Activated T-helper 1 cell treated with anti-CD3 and anti-CD28 coated beads, Interleukin-12 subunit alpha, Interleukin-12 subunit beta, Interleukin-2, Interleukin-4 antibody, amounts not matched to agents 30 ng/mL and 10 ng/mL and 1 ng/mL, durations not matched to agents 14 hours and 24 hours and 36 hours (primary cell): ENCODE measurements at regions of chr2 and their contacts with region 1.

Region 1: GRCh38 chr2:111113838-111114237 is 6.9 kb upstream of the BCL2L11 start:
- DNase-seq: no peak
- H3K4me3 Mint-ChIP-seq: no peak overlapping the region
- H3K27ac Mint-ChIP-seq: no peak overlapping the region
- H3K4me1 Mint-ChIP-seq: peaks cover 48% of the 10 kb centered on the region
- H3K27me3 Mint-ChIP-seq: peaks cover 43% of the 10 kb centered on the region

Region 2: GRCh38 chr2:111028727-111029126 is 85.1 kb before region 1 on chr2:
- intact Hi-C with region 1: loop called (anchors 2 kb)
- DNase-seq: no peak
- H3K4me3 Mint-ChIP-seq: no peak overlapping the region
- H3K27ac Mint-ChIP-seq: no peak overlapping the region
- H3K4me1 Mint-ChIP-seq: peaks cover 7% of the 10 kb centered on the region
- H3K27me3 Mint-ChIP-seq: peaks cover 36% of the 10 kb centered on the region